GM12878 (cell line): ENCODE measurements at regions of chr16 and their contacts with region 1.

Region 1: GRCh38 chr16:8892101-8892575 is 10.0 kb downstream of the LITAFD start:
- DNase-seq: peak; percentile 42
- ATAC-seq: peak; percentile 59
- H3K4me3 ChIP-seq: peak overlapping the region; percentile 59
- H3K27ac ChIP-seq: peak overlapping the region; percentile 95
- H3K4me1 ChIP-seq: peaks cover 49% of the 10 kb centered on the region
- H3K27me3 ChIP-seq: no peaks in the 10 kb centered on the region
- CTCF ChIP-seq: no peak
- EP300 ChIP-seq: no peak
- POLR2A ChIP-seq: no peak; the same call in 1 of the 2 replicates
- RAD21 ChIP-seq: no peak

Region 2: DNA sequence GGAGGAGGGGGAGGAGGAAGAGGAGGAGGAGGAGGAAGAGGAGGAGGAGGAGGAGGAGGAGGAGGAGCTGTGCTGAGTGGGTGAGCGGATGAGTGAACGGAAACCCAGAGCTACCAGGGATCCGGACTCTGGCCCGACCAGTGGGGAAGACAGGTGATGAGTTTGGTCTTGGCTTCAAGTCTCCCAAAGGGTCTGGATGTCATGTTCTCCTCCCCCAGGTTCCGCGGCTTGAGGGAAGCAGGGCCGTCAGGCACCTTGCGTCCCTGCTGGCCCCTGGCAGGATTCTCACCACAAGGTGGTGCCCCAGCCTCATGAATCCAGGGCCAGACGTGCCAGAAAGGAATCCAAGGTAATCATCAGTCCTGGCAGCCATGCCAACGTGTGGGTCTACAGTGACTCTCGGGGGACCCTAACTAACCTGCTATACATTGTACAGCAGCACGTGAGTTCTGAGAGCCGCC is 231.3 kb before region 1 on chr16:
- CTCF ChIA-PET with region 1: interaction called, 17 read pairs
- POLR2A ChIA-PET with region 1: interaction called, 3 read pairs
- RAD21 ChIA-PET with region 1: interaction called, 4 read pairs
- SMC1A ChIA-PET with region 1: interaction called, 7 read pairs
- in situ Hi-C with region 1: no loop called
- intact Hi-C with region 1: no loop called
- DNase-seq: no peak
- ATAC-seq: peak; percentile 86
- H3K4me3 ChIP-seq: no peak overlapping the region
- H3K27ac ChIP-seq: no peak overlapping the region
- H3K4me1 ChIP-seq: peaks cover under 1% of the 10 kb centered on the region; the same call in 1 of the 2 replicates
- H3K27me3 ChIP-seq: no peaks in the 10 kb centered on the region
- CTCF ChIP-seq: peak; percentile 42 to 69 (median 59)
- EP300 ChIP-seq: no peak
- POLR2A ChIP-seq: no peak
- RAD21 ChIP-seq: peak; percentile 75

Region 3: GRCh38 chr16:8878521-8878911 is 13.6 kb before region 1 on chr16:
- CTCF ChIA-PET with region 1: interaction called, 17 read pairs
- POLR2A ChIA-PET with region 1: no interaction called
- RAD21 ChIA-PET with region 1: interaction called, 19 read pairs
- SMC1A ChIA-PET with region 1: interaction called, 16 read pairs
- in situ Hi-C with region 1: no loop called
- intact Hi-C with region 1: no loop called
- DNase-seq: no peak
- ATAC-seq: no peak
- H3K4me3 ChIP-seq: no peak overlapping the region
- H3K27ac ChIP-seq: no peak overlapping the region
- H3K4me1 ChIP-seq: peaks cover 6% of the 10 kb centered on the region
- H3K27me3 ChIP-seq: no peaks in the 10 kb centered on the region
- CTCF ChIP-seq: no peak
- EP300 ChIP-seq: no peak
- POLR2A ChIP-seq: no peak
- RAD21 ChIP-seq: no peak

Region 4: DNA sequence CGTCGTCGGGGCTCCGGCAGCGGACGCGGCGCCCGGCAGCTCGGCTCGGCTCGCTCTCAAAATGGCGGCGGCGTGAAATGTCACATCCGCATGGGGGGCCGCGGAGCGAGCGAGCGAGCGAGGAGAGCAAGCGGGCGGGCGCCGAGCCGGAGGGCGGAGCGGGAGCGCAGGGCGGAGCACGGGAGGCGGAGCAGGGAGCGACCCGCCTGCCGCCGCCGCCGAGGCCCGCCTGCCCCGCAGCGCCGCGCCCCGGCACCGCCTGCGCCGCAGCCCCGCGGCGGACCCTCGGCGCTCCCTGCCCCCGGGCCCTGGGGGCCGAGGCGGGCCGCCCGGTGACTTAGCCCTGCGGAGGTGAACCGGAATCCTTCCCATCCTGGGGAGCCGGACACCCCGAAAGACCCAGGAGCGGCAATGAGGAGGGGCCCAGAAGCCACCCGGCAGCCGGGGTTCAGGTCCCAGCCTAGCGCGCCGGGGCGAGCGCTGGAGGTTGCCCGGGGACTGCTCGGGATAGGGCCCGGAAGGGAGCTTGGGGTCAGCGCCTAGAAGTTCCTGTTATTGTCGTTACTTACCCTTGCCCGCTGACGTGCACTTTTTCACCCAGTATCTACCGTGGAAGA is 71.8 kb after region 1 on chr16 and contains the start of gene USP7:
- CTCF ChIA-PET with region 1: interaction called, 6 read pairs
- POLR2A ChIA-PET with region 1: interaction called, 3 read pairs
- RAD21 ChIA-PET with region 1: interaction called, 3 read pairs
- SMC1A ChIA-PET with region 1: interaction called, 7 read pairs
- in situ Hi-C with region 1: no loop called
- intact Hi-C with region 1: loop called (anchors 2 kb)
- DNase-seq: no peak
- ATAC-seq: peak; percentile 86
- H3K4me3 ChIP-seq: peak within 1 kb of the TSS; percentile 80
- H3K27ac ChIP-seq: peak within 1 kb of the TSS; percentile 85
- H3K4me1 ChIP-seq: peaks cover 8% of the 10 kb centered on the region
- H3K27me3 ChIP-seq: no peaks in the 10 kb centered on the region
- CTCF ChIP-seq: peak in 1 of 3 experiments; percentile 13; a peak in 1 of 6 replicates
- EP300 ChIP-seq: no peak
- POLR2A ChIP-seq: peak; percentile 89
- RAD21 ChIP-seq: no peak
- polyA plus RNA-seq, gene USP7: 20.8 to 25.0 TPM

Region 5: GRCh38 chr16:9151597-9151996 is 259.5 kb after region 1 on chr16:
- CTCF ChIA-PET with region 1: no interaction called
- POLR2A ChIA-PET with region 1: no interaction called
- RAD21 ChIA-PET with region 1: no interaction called
- SMC1A ChIA-PET with region 1: no interaction called
- in situ Hi-C with region 1: no loop called
- intact Hi-C with region 1: no loop called
- DNase-seq: no peak
- ATAC-seq: no peak
- H3K4me3 ChIP-seq: no peak overlapping the region
- H3K27ac ChIP-seq: no peak overlapping the region
- H3K4me1 ChIP-seq: no peaks in the 10 kb centered on the region
- H3K27me3 ChIP-seq: no peaks in the 10 kb centered on the region
- CTCF ChIP-seq: no peak
- EP300 ChIP-seq: no peak
- POLR2A ChIP-seq: no peak
- RAD21 ChIP-seq: no peak